ENCODE measurements at regions of chr2 and their contacts with region 1.

Region 1: GRCh38 chr2:101001691-101002561 is at the start of gene RPL31:
- DNase-seq: peak; percentile 94 to 98
- ATAC-seq: peak; percentile 85 to 88
- H3K4me3 ChIP-seq: peak within 1 kb of the TSS; percentile 71
- H3K27ac ChIP-seq: peak within 1 kb of the TSS; percentile 86 to 98
- H3K4me1 ChIP-seq: peaks cover 39% of the 10 kb centered on the region
- CTCF ChIP-seq: no peak
- EP300 ChIP-seq: no peak
- POLR2A ChIP-seq: peak; percentile 97
- RAD21 ChIP-seq: no peak
- polyA plus RNA-seq, gene RPL31: 2,064 and 3,103 TPM in 2 replicates

Region 2: GRCh38 chr2:100589527-100589926 is 412.4 kb before region 1 on chr2:
- CTCF ChIA-PET with region 1: interaction called, 4 read pairs
- POLR2A ChIA-PET with region 1: interaction called, 11 read pairs
- DNase-seq: no peak
- ATAC-seq: peak; percentile 71 to 76; a peak in 5 of 6 replicates
- H3K4me3 ChIP-seq: no peak overlapping the region
- H3K27ac ChIP-seq: no peak overlapping the region
- H3K4me1 ChIP-seq: peaks cover 8% of the 10 kb centered on the region
- CTCF ChIP-seq: no peak
- EP300 ChIP-seq: no peak
- POLR2A ChIP-seq: no peak
- RAD21 ChIP-seq: no peak

Region 3: DNA sequence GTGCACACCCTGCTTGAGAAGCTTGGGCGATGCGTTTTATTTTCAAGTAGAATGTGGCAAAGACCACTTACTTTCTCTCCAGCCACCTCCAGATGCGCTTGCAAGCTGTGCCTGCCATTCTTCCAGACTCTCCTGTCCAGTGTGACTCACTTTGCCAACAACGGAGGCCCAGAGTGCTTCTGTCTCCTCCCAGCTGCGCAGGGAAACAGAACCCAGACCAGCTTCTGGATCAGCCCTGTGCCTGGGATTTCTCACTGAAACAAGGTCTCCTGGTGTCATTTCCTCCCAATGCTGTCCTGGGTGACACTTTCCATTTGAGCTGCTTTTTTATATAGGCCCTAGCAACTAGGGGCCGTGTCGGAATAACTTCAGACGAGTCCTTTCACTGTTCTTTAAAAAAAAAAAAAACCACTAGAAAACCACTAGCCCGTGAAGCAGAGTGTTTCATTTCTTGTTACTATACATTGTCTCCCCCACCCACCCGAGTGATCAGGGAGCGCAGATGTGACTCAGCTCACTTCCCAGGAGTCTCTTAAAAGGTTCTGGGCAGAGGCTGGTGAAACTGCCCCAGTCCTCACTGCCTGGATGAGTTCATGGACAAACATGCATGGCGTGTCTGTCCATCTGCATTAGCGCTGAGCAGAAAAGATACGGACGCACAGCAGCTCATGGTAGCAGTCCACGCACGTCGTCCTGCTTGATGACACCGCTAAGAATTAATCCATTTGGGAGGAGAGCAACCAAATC is 25.1 kb before region 1 on chr2:
- CTCF ChIA-PET with region 1: no interaction called
- POLR2A ChIA-PET with region 1: no interaction called
- DNase-seq: no peak
- ATAC-seq: peak; percentile 21 to 26; a peak in 2 of 6 replicates
- H3K4me3 ChIP-seq: no peak overlapping the region
- H3K27ac ChIP-seq: no peak overlapping the region
- H3K4me1 ChIP-seq: no peaks in the 10 kb centered on the region
- CTCF ChIP-seq: no peak
- EP300 ChIP-seq: no peak
- POLR2A ChIP-seq: no peak
- RAD21 ChIP-seq: no peak

Measured in A549 (cell line).